Esophagus muscularis mucosa (tissue), 4 donors: ENCODE measurements at regions of chr6 and their contacts with region 1.

Region 1: GRCh38 chr6:143427109-143427817 is 23.2 kb downstream of the ADAT2 start:
- DNase-seq: no peak
- H3K4me3 ChIP-seq: no peak overlapping the region
- H3K27ac ChIP-seq: no peak overlapping the region
- H3K4me1 ChIP-seq: no peaks in the 10 kb centered on the region
- H3K27me3 ChIP-seq: no peaks in the 10 kb centered on the region
- CTCF ChIP-seq: peak; percentile 85 to 95 (median 85)
- EP300 ChIP-seq: no peak
- POLR2A ChIP-seq: no peak

Region 2: GRCh38 chr6:142474531-142475289 is 952.6 kb before region 1 on chr6:
- intact Hi-C with region 1: loop called (anchors 5 kb)
- DNase-seq: no peak
- H3K4me3 ChIP-seq: no peak overlapping the region
- H3K27ac ChIP-seq: no peak overlapping the region
- H3K4me1 ChIP-seq: peaks cover 0 to 4% (median 0%) of the 10 kb centered on the region in 4 donors
- H3K27me3 ChIP-seq: no peaks in the 10 kb centered on the region
- CTCF ChIP-seq: peak; percentile 77 to 84 (median 81)
- EP300 ChIP-seq: no peak
- POLR2A ChIP-seq: no peak

Region 3: GRCh38 chr6:143034689-143035334 is 392.5 kb before region 1 on chr6:
- intact Hi-C with region 1: loop called (anchors 10 kb)
- DNase-seq: no peak
- H3K4me3 ChIP-seq: no peak overlapping the region
- H3K27ac ChIP-seq: no peak overlapping the region
- H3K4me1 ChIP-seq: no peaks in the 10 kb centered on the region
- H3K27me3 ChIP-seq: no peaks in the 10 kb centered on the region
- CTCF ChIP-seq: no peak
- EP300 ChIP-seq: no peak
- POLR2A ChIP-seq: no peak

Region 4: DNA sequence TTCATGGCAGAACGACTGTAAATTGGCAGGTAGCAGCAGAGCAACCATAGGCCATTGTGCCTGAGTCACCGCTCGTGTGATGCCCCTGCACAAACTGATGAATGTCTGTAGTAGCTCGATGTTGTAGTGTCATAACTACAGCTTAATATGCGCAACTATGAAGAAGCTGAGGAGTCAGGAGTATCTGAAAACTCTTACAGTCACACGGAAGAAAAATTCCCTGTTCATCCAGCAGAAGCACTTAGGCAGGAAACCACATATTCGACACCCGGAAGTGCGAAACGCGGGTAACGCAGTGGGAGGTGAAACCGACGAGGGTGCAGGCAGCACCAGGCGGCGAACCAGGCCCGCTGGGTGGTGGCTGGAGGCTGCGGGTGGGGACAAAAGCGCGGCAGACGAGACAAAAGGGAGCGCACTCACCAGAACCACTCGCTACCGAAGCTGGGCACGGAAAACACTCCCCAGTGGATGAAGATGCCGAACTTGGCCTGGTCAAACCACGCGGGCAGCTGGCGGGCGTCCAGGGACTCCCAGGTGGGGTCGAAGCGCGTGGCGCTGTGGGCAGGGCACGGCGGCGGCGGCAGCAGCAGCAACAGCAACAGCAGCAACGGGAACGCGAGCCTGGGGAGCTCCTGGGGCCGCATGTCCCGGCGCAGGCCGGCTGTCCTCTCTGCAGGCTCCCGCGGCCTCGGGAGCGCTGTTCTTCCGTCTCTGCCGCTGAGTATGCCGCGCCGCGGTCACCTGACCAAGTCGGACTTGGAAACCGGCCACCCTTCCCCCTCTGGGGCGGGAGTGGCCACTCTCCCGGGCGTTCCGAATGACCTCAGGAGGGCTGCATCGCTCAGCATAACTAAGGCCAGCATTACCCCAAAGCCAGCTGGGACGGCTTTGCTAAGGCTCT is 84.0 kb after region 1 on chr6 and contains the start of gene FUCA2:
- intact Hi-C with region 1: no loop called
- DNase-seq: peak; percentile 96
- H3K4me3 ChIP-seq: peak within 1 kb of the TSS; percentile 65 to 82 (median 70)
- H3K27ac ChIP-seq: peak within 1 kb of the TSS; percentile 82 to 89 (median 86)
- H3K4me1 ChIP-seq: peaks cover 22 to 47% (median 42%) of the 10 kb centered on the region in 4 donors
- H3K27me3 ChIP-seq: no peaks in the 10 kb centered on the region
- CTCF ChIP-seq: peak in 1 of 3 experiments; percentile 12
- EP300 ChIP-seq: no peak
- POLR2A ChIP-seq: peak; percentile 44
- total RNA-seq, gene FUCA2: 17.6 to 27.5 (median 25.8) TPM